ENCODE measurements at regions of chr16 and their contacts with region 1.

Region 1: GRCh38 chr16:84555418-84556195 is 51.1 kb upstream of the MEAK7 start:
- DNase-seq: no peak
- H3K4me3 ChIP-seq: no peak overlapping the region
- H3K4me3 Mint-ChIP-seq: peak overlapping the region in 2 of 7 donors; percentile 25 to 51
- H3K27ac ChIP-seq: no peak overlapping the region
- H3K27ac Mint-ChIP-seq: peak overlapping the region in 6 of 8 donors; percentile 63 to 95 (median 86)
- H3K4me1 ChIP-seq: peaks cover 44% of the 10 kb centered on the region
- H3K4me1 Mint-ChIP-seq: peaks cover 35 to 52% (median 45%) of the 10 kb centered on the region in 3 donors
- H3K27me3 ChIP-seq: no peaks in the 10 kb centered on the region
- H3K27me3 Mint-ChIP-seq: peaks cover 0 to 1% of the 10 kb centered on the region in 2 donors

Region 2: DNA sequence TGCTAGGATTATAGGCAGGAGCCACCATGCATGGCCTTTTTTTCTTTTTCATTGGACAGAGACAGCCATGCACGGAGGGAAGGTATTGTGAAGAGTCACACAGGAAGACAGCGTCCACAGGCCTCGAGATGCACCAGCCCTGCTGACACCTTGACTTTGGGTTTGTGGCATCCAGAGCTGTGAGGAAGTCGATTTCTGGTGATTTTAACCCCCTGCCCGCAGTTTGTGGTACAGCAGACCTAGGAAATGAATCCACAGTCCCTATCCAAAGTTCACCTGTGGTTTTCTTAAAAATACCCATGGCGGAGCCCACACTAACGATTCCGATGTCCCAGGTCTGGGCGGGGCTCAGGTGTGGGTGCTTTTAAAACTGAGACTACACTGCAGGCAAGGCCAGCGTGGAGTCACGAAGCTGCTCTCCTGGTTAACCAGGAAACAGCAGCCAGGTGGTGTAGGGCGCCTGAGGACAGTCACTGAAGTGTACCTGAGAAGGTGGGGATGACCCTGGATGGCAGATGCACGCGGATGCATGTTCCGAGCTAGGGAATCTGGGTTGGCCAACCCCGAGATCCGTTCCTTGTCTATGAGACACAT is 36.8 kb before region 1 on chr16:
- CTCF ChIA-PET with region 1: interaction called, 17 read pairs
- POLR2A ChIA-PET with region 1: interaction called, 5 read pairs
- DNase-seq: peak; percentile 45 to 86 (median 64)
- H3K4me3 ChIP-seq: peak overlapping the region; percentile 38
- H3K4me3 Mint-ChIP-seq: peak overlapping the region; percentile 7 to 80 (median 64)
- H3K27ac ChIP-seq: no peak overlapping the region
- H3K27ac Mint-ChIP-seq: peak overlapping the region; percentile 66 to 87 (median 78)
- H3K4me1 ChIP-seq: peaks cover 63% of the 10 kb centered on the region
- H3K4me1 Mint-ChIP-seq: peaks cover 55 to 69% (median 69%) of the 10 kb centered on the region in 3 donors
- H3K27me3 ChIP-seq: no peaks in the 10 kb centered on the region
- H3K27me3 Mint-ChIP-seq: no peaks in the 10 kb centered on the region

Region 3: DNA sequence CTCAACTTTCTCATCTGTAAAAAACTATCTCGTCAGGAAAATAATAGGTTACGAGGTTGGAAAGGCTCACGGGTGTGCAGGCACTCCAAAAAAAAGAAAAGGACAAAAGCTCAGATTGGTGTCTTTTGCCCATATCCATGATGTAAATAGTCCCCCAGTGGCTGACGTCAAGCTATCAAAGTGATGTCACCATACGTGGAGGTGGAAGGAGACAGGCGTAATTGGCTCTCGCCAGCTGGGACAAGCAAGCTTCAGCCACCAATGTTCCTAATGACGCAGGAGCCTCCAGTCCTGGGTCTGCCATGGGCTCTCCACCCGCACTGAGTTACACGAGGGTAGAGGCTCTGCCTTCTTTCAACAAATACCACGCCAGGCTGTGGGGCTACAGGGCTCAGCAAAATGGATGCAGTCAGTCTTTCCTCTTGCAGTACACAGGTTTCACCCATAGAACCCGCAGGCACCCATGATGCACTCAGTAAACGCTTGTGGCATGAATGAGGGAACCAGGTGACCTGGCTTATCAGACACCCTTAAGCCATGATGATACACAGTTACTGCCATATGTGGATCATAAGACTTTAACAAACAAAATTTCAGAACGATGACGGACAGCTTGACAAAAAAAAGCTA is 11.8 kb after region 1 on chr16:
- CTCF ChIA-PET with region 1: interaction called, 20 read pairs
- POLR2A ChIA-PET with region 1: interaction called, 7 read pairs
- DNase-seq: peak in 2 of 5 donors; percentile 19 to 59
- H3K4me3 ChIP-seq: no peak overlapping the region
- H3K4me3 Mint-ChIP-seq: no peak overlapping the region
- H3K27ac ChIP-seq: no peak overlapping the region
- H3K27ac Mint-ChIP-seq: peak overlapping the region in 4 of 8 donors; percentile 32 to 91 (median 70)
- H3K4me1 ChIP-seq: no peaks in the 10 kb centered on the region
- H3K4me1 Mint-ChIP-seq: peaks cover 26 to 56% (median 53%) of the 10 kb centered on the region in 3 donors
- H3K27me3 ChIP-seq: no peaks in the 10 kb centered on the region
- H3K27me3 Mint-ChIP-seq: peaks cover 0 to 2% of the 10 kb centered on the region in 2 donors

Region 4: DNA sequence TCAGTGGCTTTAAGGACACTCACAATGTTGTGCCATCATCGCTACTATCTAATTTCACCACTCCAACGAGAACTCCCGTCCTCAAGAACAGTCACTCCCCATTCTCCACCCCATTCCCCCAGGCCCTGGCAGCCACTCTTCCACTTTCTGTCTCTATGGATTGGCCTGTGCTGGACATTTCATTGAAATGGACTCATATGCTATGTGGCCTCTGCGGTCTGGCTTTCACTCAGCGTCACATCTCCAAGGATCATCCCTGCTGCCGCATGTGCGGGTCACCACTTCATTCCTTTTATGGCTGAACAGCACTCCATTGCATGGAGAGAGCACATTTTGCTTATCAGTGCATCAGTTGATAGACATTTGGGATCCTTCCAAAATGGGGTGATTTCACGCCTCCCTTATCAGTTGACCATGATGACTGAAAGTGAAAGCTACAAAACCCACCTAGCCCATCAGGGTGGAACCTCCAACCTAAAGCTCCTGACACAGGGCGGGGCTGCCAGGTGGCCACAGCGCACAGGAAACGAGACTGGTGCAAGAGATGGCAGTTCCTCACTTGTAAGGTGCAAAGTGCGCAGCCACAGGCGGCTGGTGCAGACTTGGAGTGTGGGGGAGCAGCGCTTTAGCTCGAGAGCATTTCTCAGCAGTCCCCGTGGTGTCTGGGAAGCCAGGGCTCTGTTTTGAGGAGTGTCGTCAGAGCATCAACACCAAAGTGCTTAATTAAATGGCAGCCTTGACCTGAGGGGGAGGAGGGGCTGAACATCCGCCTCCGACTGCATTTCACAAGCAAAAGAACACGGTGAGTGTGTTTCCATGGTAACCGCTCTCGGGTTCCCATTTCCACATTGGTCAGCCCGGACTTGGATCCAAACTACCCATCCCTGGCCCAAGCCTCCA is 38.5 kb after region 1 on chr16:
- CTCF ChIA-PET with region 1: interaction called, 12 read pairs
- POLR2A ChIA-PET with region 1: interaction called, 30 read pairs
- DNase-seq: peak; percentile 76 to 97 (median 83)
- H3K4me3 ChIP-seq: peak overlapping the region; percentile 53
- H3K4me3 Mint-ChIP-seq: peak overlapping the region; percentile 72 to 96 (median 88)
- H3K27ac ChIP-seq: peak overlapping the region; percentile 90
- H3K27ac Mint-ChIP-seq: peak overlapping the region; percentile 95 to 100 (median 99)
- H3K4me1 ChIP-seq: peaks cover 52% of the 10 kb centered on the region
- H3K4me1 Mint-ChIP-seq: peaks cover 64 to 85% (median 72%) of the 10 kb centered on the region in 3 donors
- H3K27me3 ChIP-seq: no peaks in the 10 kb centered on the region
- H3K27me3 Mint-ChIP-seq: peaks cover 0 to 3% of the 10 kb centered on the region in 2 donors

Region 5: GRCh38 chr16:84806256-84806889 is 250.8 kb after region 1 on chr16:
- CTCF ChIA-PET with region 1: no interaction called
- POLR2A ChIA-PET with region 1: no interaction called
- DNase-seq: no peak
- H3K4me3 ChIP-seq: no peak overlapping the region
- H3K4me3 Mint-ChIP-seq: no peak overlapping the region
- H3K27ac ChIP-seq: peak overlapping the region; percentile 31
- H3K27ac Mint-ChIP-seq: no peak overlapping the region
- H3K4me1 ChIP-seq: peaks cover 3% of the 10 kb centered on the region
- H3K4me1 Mint-ChIP-seq: peaks cover 3 to 11% (median 4%) of the 10 kb centered on the region in 3 donors
- H3K27me3 ChIP-seq: no peaks in the 10 kb centered on the region
- H3K27me3 Mint-ChIP-seq: peaks cover 6 to 16% of the 10 kb centered on the region in 2 donors